ENCODE measurements at regions of chr9 and their contacts with region 1.

Region 1: GRCh38 chr9:32251539-32251938 is 132.9 kb upstream of the ACO1 start:
- DNase-seq: peak; percentile 57 to 77 (median 67)
- H3K4me3 ChIP-seq: no peak overlapping the region
- H3K27ac ChIP-seq: no peak overlapping the region
- H3K4me1 ChIP-seq: peaks cover 0 to 4% of the 10 kb centered on the region in 2 donors
- H3K27me3 ChIP-seq: no peaks in the 10 kb centered on the region
- CTCF ChIP-seq: peak; percentile 42 to 69 (median 60)
- POLR2A ChIP-seq: no peak

Region 2: GRCh38 chr9:31119882-31120454 is 1131.6 kb before region 1 on chr9:
- intact Hi-C with region 1: loop called in 1 of 2 experiments (anchors 10 kb)
- DNase-seq: peak in 5 of 7 donors; percentile 13 to 57 (median 28)
- H3K4me3 ChIP-seq: no peak overlapping the region
- H3K27ac ChIP-seq: no peak overlapping the region
- H3K4me1 ChIP-seq: no peaks in the 10 kb centered on the region
- H3K27me3 ChIP-seq: no peaks in the 10 kb centered on the region
- CTCF ChIP-seq: peak; percentile 26 to 56 (median 46)
- POLR2A ChIP-seq: no peak